ENCODE measurements at regions of chr20 and their contacts with region 1.

Region 1: DNA sequence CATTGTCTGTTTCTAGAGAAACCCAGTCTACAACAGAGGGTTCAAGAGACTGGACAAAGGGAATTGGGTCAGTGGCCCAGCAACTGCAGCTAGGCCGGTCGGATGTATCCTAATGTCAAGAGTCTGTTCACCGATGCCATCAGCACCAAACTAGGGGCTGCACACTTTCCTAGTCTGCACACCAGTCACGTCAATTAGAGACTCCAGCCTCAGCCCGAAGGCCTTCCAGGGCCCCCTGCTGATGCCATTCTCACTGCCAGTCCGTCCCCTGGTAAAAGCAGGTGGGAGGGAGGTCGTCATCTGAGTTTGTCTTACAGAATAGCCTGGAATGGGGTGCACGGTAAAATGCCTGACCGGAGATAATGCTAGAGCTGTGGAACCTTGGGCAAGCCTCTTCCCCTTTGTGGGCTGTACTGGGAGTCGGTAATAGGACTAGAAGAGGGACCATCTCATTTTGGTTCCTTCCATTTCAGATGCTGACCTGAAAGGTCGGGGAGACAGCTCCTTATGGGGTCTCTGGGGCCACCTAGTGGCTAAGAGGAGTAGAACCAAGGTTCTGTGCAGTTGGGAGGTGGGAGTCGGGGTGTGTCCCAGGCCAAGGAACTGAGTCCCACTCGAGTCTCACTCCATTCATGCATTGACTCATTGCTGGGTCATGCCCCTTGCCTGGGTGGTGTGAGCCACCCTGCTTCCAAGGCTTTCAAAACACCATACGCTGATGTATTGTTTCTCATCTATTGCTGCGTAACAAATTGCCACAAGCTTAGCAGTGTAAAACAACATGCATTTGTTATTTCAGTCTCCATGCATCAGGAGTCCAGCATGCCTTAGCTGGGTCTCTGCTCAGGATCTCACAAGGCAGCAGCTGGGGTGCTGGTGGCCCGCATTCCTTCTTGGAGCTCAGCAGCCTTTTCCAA is 5.1 kb downstream of the SOX12 start:
- DNase-seq: peak; percentile 79 to 88
- ATAC-seq: peak; percentile 25 to 63
- H3K4me3 ChIP-seq: no peak overlapping the region
- H3K27ac ChIP-seq: peak overlapping the region in 1 of 2 experiments; percentile 12; a peak in 1 of 6 replicates
- H3K4me1 ChIP-seq: peaks cover 32% of the 10 kb centered on the region
- CTCF ChIP-seq: peak; percentile 86
- EP300 ChIP-seq: no peak
- POLR2A ChIP-seq: no peak
- RAD21 ChIP-seq: peak; percentile 84 to 93

Region 2: DNA sequence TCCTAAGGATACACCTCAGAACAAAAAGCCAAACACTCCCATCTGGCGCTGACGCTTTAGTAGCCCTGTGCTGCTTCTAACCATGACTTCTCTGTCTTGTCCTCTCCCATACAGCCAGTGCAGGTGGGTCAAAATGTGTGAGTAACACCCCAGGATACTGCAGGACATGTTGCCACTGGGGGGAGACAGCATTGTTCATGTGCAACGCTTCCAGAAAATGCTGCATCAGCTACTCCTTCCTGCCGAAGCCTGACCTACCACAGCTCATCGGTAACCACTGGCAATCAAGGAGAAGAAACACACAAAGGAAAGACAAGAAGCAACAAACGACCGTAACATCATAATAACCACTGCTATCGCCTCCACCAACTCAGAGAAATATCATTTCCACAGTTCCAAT is 71.5 kb before region 1 on chr20:
- CTCF ChIA-PET with region 1: interaction called, 86 read pairs
- POLR2A ChIA-PET with region 1: no interaction called
- DNase-seq: peak; percentile 44 to 59
- ATAC-seq: peak; percentile 60 to 84; a peak in 5 of 6 replicates
- H3K4me3 ChIP-seq: no peak overlapping the region
- H3K27ac ChIP-seq: no peak overlapping the region
- H3K4me1 ChIP-seq: no peaks in the 10 kb centered on the region
- CTCF ChIP-seq: peak; percentile 30; the same call in 2 of the 3 replicates
- EP300 ChIP-seq: no peak
- POLR2A ChIP-seq: no peak
- RAD21 ChIP-seq: peak; percentile 27 to 44; a peak in 1 of 5 replicates

Region 3: DNA sequence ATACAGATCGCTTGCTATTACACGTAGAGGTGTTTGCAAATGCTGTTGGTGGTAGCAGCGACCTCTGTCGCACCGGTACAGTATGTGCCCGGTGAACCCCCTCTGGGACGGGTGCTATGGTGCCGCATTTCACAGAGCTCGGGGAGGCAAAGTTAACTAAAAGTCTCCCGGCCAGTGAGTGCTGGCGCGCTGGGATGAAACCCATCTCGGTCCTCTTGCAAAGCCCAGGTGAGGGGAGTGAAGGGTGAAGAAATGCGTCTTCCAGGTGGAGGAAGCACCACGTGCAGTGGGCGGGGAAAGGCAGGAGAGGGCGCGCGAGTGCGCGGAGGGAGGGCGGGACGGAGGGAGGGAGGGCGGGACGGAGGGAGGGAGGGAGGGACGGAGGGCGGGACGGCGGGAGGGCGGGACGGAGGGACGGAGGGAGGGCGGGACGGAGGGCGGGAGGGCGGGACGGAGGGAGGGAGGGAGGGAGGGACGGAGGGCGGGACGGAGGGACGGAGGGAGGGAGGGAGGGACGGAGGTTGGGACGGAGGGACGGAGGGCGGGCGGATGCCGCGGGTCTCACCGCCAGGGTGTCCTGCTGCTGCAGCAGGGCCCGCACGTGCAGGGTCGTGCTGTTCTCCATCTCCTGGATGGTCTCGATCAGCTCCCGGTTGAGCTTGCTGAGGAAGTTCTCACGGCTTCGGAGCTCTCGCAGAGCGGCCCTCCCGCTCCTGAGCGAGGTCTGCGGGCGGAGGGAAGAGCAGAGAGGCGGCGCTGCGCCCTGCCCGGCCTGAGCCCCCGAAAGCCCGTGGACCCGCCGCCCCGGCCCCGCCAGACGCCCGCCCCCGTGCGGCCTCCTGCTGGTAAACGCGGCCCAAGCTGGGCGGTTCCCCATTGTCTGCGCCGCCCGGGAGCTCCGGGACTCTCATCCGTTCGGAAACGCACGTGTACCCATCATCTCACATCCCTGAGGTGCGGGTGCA is 51.6 kb before region 1 on chr20:
- CTCF ChIA-PET with region 1: interaction called, 86 read pairs
- POLR2A ChIA-PET with region 1: no interaction called
- DNase-seq: no peak
- ATAC-seq: no peak
- H3K4me3 ChIP-seq: no peak overlapping the region
- H3K27ac ChIP-seq: no peak overlapping the region
- H3K4me1 ChIP-seq: no peaks in the 10 kb centered on the region
- CTCF ChIP-seq: no peak
- EP300 ChIP-seq: no peak
- POLR2A ChIP-seq: no peak
- RAD21 ChIP-seq: no peak

Region 4: GRCh38 chr20:297098-297924 is 33.2 kb before region 1 on chr20 and contains the start of gene ZCCHC3:
- CTCF ChIA-PET with region 1: interaction called, 111 read pairs
- POLR2A ChIA-PET with region 1: interaction called, 69 read pairs
- DNase-seq: peak; percentile 94 to 95
- ATAC-seq: peak; percentile 92 to 96
- H3K4me3 ChIP-seq: peak within 1 kb of the TSS; percentile 75
- H3K27ac ChIP-seq: peak within 1 kb of the TSS; percentile 95 to 97
- H3K4me1 ChIP-seq: peaks cover 33% of the 10 kb centered on the region
- CTCF ChIP-seq: peak; percentile 31; the same call in 2 of the 3 replicates
- EP300 ChIP-seq: no peak
- POLR2A ChIP-seq: peak; percentile 51
- RAD21 ChIP-seq: peak; percentile 5 to 46; a peak in 3 of 5 replicates
- polyA plus RNA-seq, gene ZCCHC3: 17.4 and 19.8 TPM in 2 replicates

Region 5: GRCh38 chr20:341682-342081 is 11.2 kb after region 1 on chr20:
- CTCF ChIA-PET with region 1: interaction called, 77 read pairs
- POLR2A ChIA-PET with region 1: interaction called, 30 read pairs
- DNase-seq: peak in 1 of 2 experiments; percentile 95
- ATAC-seq: peak; percentile 77
- H3K4me3 ChIP-seq: no peak overlapping the region
- H3K27ac ChIP-seq: no peak overlapping the region
- H3K4me1 ChIP-seq: peaks cover 6% of the 10 kb centered on the region
- CTCF ChIP-seq: no peak
- EP300 ChIP-seq: no peak
- POLR2A ChIP-seq: no peak
- RAD21 ChIP-seq: no peak

Region 6: GRCh38 chr20:420641-421574 is 90.4 kb after region 1 on chr20:
- CTCF ChIA-PET with region 1: no interaction called
- POLR2A ChIA-PET with region 1: no interaction called
- DNase-seq: peak; percentile 63 to 70
- ATAC-seq: peak; percentile 11 to 69; a peak in 3 of 6 replicates
- H3K4me3 ChIP-seq: no peak overlapping the region
- H3K27ac ChIP-seq: peak overlapping the region in 1 of 2 experiments; percentile 59; a peak in 3 of 6 replicates
- H3K4me1 ChIP-seq: peaks cover 21% of the 10 kb centered on the region
- CTCF ChIP-seq: no peak
- EP300 ChIP-seq: no peak
- POLR2A ChIP-seq: no peak
- RAD21 ChIP-seq: no peak

Region 7: DNA sequence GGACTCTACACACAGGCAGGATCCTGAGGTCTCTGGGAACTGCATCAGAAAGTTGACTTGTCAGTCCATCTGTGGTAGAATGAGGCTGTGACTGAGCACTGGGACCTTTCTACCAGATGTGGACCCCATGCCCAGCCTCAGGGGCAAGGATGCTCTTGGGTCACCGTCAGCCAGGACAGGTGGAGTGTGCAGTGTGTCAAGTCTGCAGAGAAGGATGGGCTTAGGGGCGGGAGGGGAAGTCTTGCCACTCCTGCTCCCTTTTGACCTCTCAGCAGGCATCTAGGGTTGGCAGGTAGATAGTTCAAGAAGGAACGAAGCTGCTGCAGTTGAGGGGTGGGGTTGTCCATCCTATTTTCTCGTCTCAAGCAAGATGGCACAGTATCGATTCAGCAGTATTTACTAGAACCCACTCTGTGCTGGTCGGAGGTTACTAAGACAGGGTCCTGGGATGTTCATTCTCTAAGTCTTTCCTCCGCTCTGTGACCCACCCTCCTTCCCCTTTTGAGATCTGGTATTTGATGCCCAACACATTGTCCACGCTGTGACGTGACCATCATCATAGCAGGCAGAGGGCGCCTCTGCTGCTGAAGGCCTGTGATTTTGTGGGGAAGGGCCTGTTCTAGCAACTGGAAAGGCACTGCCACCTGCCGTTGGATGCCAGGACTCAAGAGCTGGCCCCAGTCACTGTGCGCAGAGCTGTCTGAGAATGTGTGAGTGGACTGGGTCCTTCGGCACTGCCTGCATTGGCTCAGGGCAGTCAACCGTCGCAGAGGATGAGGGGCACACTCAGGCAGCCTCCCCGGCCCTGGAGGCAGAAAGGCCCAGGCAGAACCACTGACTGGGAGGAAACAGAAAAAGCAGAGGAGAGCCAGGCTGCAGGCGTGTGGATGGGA is 100.8 kb after region 1 on chr20:
- CTCF ChIA-PET with region 1: interaction called, 26 read pairs
- POLR2A ChIA-PET with region 1: no interaction called
- DNase-seq: peak; percentile 94 to 95
- ATAC-seq: peak; percentile 70 to 93
- H3K4me3 ChIP-seq: no peak overlapping the region
- H3K27ac ChIP-seq: peak overlapping the region; percentile 27 to 73; a peak in 5 of 6 replicates
- H3K4me1 ChIP-seq: peaks cover 16% of the 10 kb centered on the region
- CTCF ChIP-seq: peak; percentile 99
- EP300 ChIP-seq: no peak
- POLR2A ChIP-seq: no peak
- RAD21 ChIP-seq: peak; percentile 95 to 98

Region 8: GRCh38 chr20:507761-508332 is 177.4 kb after region 1 on chr20:
- CTCF ChIA-PET with region 1: no interaction called
- POLR2A ChIA-PET with region 1: no interaction called
- DNase-seq: no peak
- ATAC-seq: no peak
- H3K4me3 ChIP-seq: no peak overlapping the region
- H3K27ac ChIP-seq: no peak overlapping the region
- H3K4me1 ChIP-seq: peaks cover 35% of the 10 kb centered on the region
- CTCF ChIP-seq: no peak
- EP300 ChIP-seq: no peak
- POLR2A ChIP-seq: no peak
- RAD21 ChIP-seq: no peak